Activated T-helper 2 cell treated with anti-CD3 and anti-CD28 coated beads, Interferon-gamma antibody, Interleukin-2, Interleukin-4, amounts not matched to agents 10 μg/mL and 5 μg/mL and 100 μg/mL, durations not matched to agents 14 hours and 24 hours and 36 hours (primary cell): ENCODE measurements at regions of chrX and their contacts with region 1.

Region 1: GRCh38 chrX:121308276-121308805 is 260.9 kb downstream of the GLUD2 start:
- DNase-seq: peak; percentile 54
- H3K4me3 Mint-ChIP-seq: peak overlapping the region; percentile 49
- H3K27ac Mint-ChIP-seq: peak overlapping the region; percentile 96
- H3K4me1 Mint-ChIP-seq: peaks cover 29% of the 10 kb centered on the region
- H3K27me3 Mint-ChIP-seq: no peaks in the 10 kb centered on the region

Region 2: GRCh38 chrX:120499301-120500072 is 808.9 kb before region 1 on chrX:
- intact Hi-C with region 1: loop called (anchors 1 kb)
- DNase-seq: no peak
- H3K4me3 Mint-ChIP-seq: no peak overlapping the region
- H3K27ac Mint-ChIP-seq: no peak overlapping the region
- H3K4me1 Mint-ChIP-seq: peaks cover 5% of the 10 kb centered on the region
- H3K27me3 Mint-ChIP-seq: peaks cover 3% of the 10 kb centered on the region

Region 3: DNA sequence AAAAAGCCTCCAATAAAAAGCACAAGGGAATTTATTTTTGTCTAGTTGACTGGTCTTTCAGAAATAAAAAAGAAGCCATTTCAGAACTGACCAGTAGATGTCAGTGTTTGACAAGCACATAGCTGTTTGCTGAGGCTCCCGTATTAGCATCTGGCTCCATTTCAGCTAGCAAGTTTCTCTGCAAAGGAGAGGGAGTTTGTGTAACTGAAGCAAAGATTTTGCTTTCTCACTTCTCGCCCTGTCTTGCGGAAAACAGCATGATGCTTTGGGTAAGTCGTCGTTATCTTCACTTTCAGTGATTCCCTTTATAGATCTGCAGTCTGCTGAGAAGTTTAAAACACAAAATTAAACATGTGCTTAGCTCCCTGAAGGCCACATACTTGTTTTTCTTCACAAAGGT is 518.2 kb before region 1 on chrX:
- intact Hi-C with region 1: loop called (anchors 1 kb)
- DNase-seq: peak; percentile 10
- H3K4me3 Mint-ChIP-seq: peak overlapping the region; percentile 42
- H3K27ac Mint-ChIP-seq: peak overlapping the region; percentile 91
- H3K4me1 Mint-ChIP-seq: peaks cover 29% of the 10 kb centered on the region
- H3K27me3 Mint-ChIP-seq: no peaks in the 10 kb centered on the region

Region 4: GRCh38 chrX:121052111-121052510 is 256.2 kb before region 1 on chrX:
- intact Hi-C with region 1: loop called (anchors 5 kb)
- DNase-seq: no peak
- H3K4me3 Mint-ChIP-seq: no peak overlapping the region
- H3K27ac Mint-ChIP-seq: no peak overlapping the region
- H3K4me1 Mint-ChIP-seq: no peaks in the 10 kb centered on the region
- H3K27me3 Mint-ChIP-seq: no peaks in the 10 kb centered on the region

Region 5: DNA sequence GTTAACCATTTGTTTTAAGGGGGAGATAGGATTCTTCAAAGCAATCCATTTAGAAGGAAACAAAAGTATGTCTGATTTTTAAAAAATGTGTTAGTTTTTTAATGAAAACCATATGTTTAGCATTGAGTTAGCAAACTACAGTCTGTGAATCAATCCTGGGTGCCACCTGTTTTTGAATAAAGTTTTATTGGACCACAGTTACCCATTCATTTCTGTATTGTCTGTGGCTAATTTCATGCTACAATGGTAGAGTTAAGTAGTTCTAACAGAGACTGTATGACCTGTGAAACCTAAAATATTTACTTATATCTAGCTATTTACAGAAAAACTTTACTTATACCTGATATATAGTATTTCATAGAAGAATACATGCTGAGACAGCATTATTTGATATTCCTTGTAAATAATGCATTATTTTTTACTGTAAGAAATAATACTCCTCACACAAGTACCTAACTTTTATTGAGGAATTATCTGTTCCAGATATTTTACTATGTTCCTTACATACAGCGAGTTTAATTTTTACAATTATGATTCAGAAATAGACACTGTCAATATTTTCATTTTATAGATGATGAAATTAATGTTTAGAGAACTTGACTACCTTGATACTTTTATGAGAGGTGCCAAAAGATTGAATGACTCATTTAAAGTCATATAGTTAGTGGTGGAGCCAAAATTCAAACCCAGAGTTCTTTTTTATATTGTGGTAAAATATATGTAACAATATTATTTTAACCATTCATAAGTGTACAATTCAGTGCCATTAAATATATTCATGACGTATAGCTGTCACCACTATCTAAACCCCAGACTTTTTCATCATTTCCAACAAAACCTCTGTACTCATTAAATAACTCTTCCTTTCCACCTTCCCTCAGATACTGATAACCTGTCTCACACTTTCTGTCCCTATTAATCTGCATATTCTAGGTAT is 139.0 kb before region 1 on chrX:
- intact Hi-C with region 1: no loop called
- DNase-seq: no peak
- H3K4me3 Mint-ChIP-seq: no peak overlapping the region
- H3K27ac Mint-ChIP-seq: no peak overlapping the region
- H3K4me1 Mint-ChIP-seq: no peaks in the 10 kb centered on the region
- H3K27me3 Mint-ChIP-seq: no peaks in the 10 kb centered on the region

Region 6: GRCh38 chrX:121256647-121257046 is 51.7 kb before region 1 on chrX:
- intact Hi-C with region 1: loop called (anchors 1 kb)
- DNase-seq: no peak
- H3K4me3 Mint-ChIP-seq: no peak overlapping the region
- H3K27ac Mint-ChIP-seq: peak overlapping the region; percentile 76
- H3K4me1 Mint-ChIP-seq: peaks cover 11% of the 10 kb centered on the region
- H3K27me3 Mint-ChIP-seq: no peaks in the 10 kb centered on the region